Colonic mucosa (tissue), 4 donors: ENCODE measurements at regions of chr11 and their contacts with region 1.

Region 1: GRCh38 chr11:128956401-128957201 is 13.9 kb upstream of the TP53AIP1 start:
- DNase-seq: peak; percentile 60
- H3K4me3 ChIP-seq: no peak overlapping the region
- H3K27ac ChIP-seq: no peak overlapping the region
- H3K4me1 ChIP-seq: no peaks in the 10 kb centered on the region
- H3K27me3 ChIP-seq: no peaks in the 10 kb centered on the region
- CTCF ChIP-seq: peak; percentile 50

Region 2: DNA sequence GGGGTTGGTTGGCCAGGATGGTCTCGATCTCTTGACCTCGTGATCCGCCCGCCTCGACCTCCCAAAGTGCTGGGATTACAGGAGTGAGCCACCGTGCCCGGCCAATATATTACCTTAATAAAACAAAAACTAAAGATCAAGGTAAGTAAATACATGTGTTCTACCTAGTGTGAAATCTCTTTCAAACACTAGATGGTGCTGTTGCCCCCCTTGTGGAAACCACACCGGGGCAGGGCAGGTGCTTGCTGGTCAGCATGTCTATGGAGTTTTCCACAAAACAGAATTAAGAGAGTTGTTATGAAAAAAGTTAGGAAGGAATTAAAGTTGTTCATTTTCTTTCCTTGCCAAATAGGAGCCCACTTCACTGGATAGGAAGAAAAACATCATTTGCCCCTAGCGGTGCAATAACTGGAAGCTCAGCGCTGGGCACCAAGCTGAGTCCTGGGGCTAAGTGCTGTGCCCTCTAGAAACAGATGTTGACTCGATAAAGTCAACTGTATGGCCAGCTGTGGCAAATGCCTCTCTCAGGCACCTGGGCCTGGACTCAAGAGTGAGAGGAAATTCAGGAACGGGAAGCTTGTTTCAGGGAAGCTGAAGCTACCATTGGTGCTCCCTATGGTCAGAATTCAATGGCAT is 71.8 kb before region 1 on chr11:
- intact Hi-C with region 1: loop called (anchors 2 kb)
- DNase-seq: peak; percentile 80
- H3K4me3 ChIP-seq: no peak overlapping the region
- H3K27ac ChIP-seq: no peak overlapping the region
- H3K4me1 ChIP-seq: no peaks in the 10 kb centered on the region
- H3K27me3 ChIP-seq: peaks cover 8% of the 10 kb centered on the region
- CTCF ChIP-seq: peak; percentile 68

Region 3: DNA sequence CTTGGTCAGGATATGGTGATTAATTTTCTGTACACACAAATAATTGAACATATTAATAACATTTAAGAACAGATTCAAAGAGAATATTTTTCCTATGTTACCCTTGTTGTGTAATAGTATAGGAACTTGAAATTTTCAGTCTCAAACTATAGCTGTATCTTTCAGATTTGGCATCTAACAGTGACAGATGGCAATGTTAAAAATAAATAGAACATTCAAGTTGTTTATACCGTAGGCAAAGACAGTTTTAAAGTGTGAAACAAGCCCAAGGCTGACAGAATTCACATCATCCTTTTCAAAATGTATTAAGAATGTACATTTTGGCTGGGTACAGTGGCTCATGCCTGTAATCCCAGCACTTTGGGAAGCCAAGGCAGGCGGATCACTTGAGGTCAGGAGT is 78.6 kb after region 1 on chr11:
- intact Hi-C with region 1: no loop called
- DNase-seq: no peak
- H3K4me3 ChIP-seq: no peak overlapping the region
- H3K27ac ChIP-seq: no peak overlapping the region
- H3K4me1 ChIP-seq: no peaks in the 10 kb centered on the region
- H3K27me3 ChIP-seq: no peaks in the 10 kb centered on the region
- CTCF ChIP-seq: no peak